HepG2 (cell line): ENCODE measurements at regions of chr2 and their contacts with region 1.

Region 1: DNA sequence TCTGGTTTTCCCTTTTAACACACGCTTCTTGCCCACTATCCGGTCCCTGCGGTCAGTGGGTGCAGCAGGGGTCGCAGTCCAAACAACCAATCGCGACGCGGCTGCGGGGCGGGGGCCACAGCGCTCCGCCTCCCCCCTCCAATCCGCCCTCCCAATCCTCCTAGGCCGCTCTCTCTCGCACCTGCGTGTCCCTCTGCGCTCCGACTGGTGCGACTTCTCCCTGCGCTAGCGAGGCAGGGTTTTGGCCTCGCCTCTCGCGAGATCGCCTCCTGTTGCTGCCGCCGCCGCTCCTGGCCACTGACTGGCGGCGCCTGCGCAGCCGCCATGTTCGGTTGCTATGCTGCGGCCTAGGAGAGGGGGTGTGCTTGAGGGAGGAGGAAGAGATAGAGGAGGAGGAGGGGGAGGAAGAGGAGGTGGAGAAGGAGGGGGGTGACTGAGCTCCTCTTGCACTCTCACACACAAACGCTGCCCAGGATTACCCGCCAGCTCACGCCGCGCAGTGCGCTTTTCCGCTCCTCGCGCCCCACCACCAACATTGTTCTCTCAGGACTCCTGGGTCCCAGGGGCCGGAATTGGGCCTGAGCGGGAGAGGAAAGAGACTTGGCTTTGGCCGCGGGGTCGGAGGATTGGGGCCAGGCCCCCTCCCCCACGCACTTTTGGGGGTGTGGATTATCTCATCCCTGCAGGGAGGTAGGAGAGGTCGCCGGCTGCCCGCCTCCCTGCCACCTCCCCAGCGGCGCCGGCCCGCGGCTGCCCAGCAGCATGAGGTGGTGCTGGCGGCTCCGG is at the start of gene PTPN4:
- DNase-seq: peak; percentile 99
- ATAC-seq: peak; percentile 95
- H3K4me3 ChIP-seq: peak within 1 kb of the TSS; percentile 84 to 97 (median 87)
- H3K27ac ChIP-seq: peak within 1 kb of the TSS; percentile 91
- H3K4me1 ChIP-seq: peaks cover 57% of the 10 kb centered on the region
- H3K27me3 ChIP-seq: no peaks in the 10 kb centered on the region; a peak in 1 of 5 replicates
- CTCF ChIP-seq: peak; percentile 53
- EP300 ChIP-seq: peak; percentile 11 to 64; a peak in 3 of 4 replicates
- POLR2A ChIP-seq: peak; percentile 96
- RAD21 ChIP-seq: 0 out of 2 replicates have a peak, but pooled peaks have one; percentile 32
- total RNA-seq, gene PTPN4: 34.6 and 40.4 TPM in 2 replicates

Region 2: DNA sequence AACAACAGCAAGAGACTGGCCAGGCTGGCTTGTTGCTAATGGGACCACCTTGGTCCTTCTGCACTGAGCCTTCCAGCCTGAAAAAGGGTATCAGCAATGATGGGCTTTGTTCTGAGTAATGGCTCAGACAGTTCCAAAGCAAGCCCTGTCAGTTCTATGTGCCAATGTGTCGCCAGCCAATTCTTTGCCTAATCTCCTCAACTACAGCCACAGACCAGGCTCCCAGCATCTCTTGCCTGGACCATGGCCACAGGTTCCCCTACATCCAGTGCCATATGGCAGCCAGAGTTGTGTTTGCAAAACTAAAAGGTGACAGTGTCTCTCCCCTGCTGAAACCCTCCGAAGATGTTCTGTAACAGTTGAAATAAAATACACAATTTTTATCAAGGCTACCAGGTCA is 142.2 kb before region 1 on chr2:
- CTCF ChIA-PET with region 1: no interaction called
- POLR2A ChIA-PET with region 1: no interaction called
- in situ Hi-C with region 1: no loop called
- intact Hi-C with region 1: no loop called
- DNase-seq: no peak
- ATAC-seq: no peak; the same call in 2 of the 3 replicates
- H3K4me3 ChIP-seq: no peak overlapping the region
- H3K27ac ChIP-seq: no peak overlapping the region
- H3K4me1 ChIP-seq: peaks cover 11% of the 10 kb centered on the region
- H3K27me3 ChIP-seq: no peaks in the 10 kb centered on the region; a peak in 1 of 5 replicates
- CTCF ChIP-seq: no peak
- EP300 ChIP-seq: no peak
- POLR2A ChIP-seq: no peak
- RAD21 ChIP-seq: no peak

Region 3: GRCh38 chr2:119678998-119679710 is 80.5 kb before region 1 on chr2 and contains the start of gene TMEM177:
- CTCF ChIA-PET with region 1: no interaction called
- POLR2A ChIA-PET with region 1: interaction called, 14 read pairs
- in situ Hi-C with region 1: no loop called
- intact Hi-C with region 1: no loop called
- DNase-seq: peak; percentile 87
- ATAC-seq: peak; percentile 87
- H3K4me3 ChIP-seq: peak within 1 kb of the TSS; percentile 80 to 92 (median 81)
- H3K27ac ChIP-seq: peak within 1 kb of the TSS; percentile 71
- H3K4me1 ChIP-seq: peaks cover 49% of the 10 kb centered on the region
- H3K27me3 ChIP-seq: peaks cover 3 to 12% of the 10 kb centered on the region in 2 experiments; a peak in 3 of 5 replicates
- CTCF ChIP-seq: peak; percentile 25; the same call in 1 of the 2 replicates
- EP300 ChIP-seq: no peak
- POLR2A ChIP-seq: peak; percentile 90 to 99
- RAD21 ChIP-seq: peak; percentile 56
- total RNA-seq, gene TMEM177: 44.7 and 47.9 TPM in 2 replicates

Region 4: DNA sequence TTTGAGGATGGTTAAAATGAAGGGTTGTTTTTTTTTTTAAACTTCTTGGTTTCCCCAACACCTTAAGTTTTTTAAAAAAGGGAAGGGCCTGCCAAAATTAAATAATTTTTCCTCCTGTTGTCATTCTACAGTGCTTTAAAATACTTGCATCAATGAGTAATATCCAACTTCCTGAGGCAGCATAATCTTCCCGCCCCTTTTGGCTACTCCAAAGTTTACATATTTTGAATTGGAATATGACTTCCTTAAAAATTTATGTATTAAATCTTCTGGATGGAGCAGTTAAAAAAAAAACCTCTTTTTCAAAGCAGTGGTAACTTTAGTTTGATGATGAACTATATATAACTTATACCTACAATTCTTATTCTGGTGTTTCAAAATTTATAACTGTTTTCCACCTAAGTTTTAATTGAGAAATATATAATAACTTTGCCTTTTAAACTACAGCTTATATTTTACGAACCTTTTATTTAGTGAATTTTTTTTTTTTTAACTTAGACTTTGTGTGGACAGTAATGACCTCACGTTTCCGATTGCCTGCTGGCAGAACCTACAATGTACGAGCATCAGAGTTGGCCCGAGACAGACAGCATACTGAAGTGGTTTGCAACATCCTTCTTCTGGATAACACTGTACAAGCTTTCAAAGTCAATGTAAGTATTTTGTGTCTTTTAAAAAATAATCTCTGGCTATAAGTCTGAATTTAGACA is 49.9 kb after region 1 on chr2:
- CTCF ChIA-PET with region 1: no interaction called
- POLR2A ChIA-PET with region 1: no interaction called
- in situ Hi-C with region 1: loop called (anchors 5 kb)
- intact Hi-C with region 1: loop called (anchors 5 kb)
- DNase-seq: no peak
- ATAC-seq: no peak
- H3K4me3 ChIP-seq: no peak overlapping the region
- H3K27ac ChIP-seq: no peak overlapping the region
- H3K4me1 ChIP-seq: peaks cover 17% of the 10 kb centered on the region
- H3K27me3 ChIP-seq: no peaks in the 10 kb centered on the region; a peak in 1 of 5 replicates
- CTCF ChIP-seq: no peak
- EP300 ChIP-seq: no peak
- POLR2A ChIP-seq: no peak
- RAD21 ChIP-seq: no peak

Region 5: GRCh38 chr2:119856469-119856912 is 96.8 kb after region 1 on chr2:
- CTCF ChIA-PET with region 1: no interaction called
- POLR2A ChIA-PET with region 1: no interaction called
- in situ Hi-C with region 1: no loop called
- intact Hi-C with region 1: no loop called
- DNase-seq: no peak
- ATAC-seq: no peak
- H3K4me3 ChIP-seq: no peak overlapping the region
- H3K27ac ChIP-seq: no peak overlapping the region
- H3K4me1 ChIP-seq: 0 out of 2 replicates have a peak, but pooled peaks cover 7% of the 10 kb centered on the region
- H3K27me3 ChIP-seq: no peaks in the 10 kb centered on the region
- CTCF ChIP-seq: no peak
- EP300 ChIP-seq: no peak
- POLR2A ChIP-seq: no peak
- RAD21 ChIP-seq: no peak